ENCODE measurements at regions of chr19 and their contacts with region 1.

Region 1: GRCh38 chr19:13574933-13575332 is 68.7 kb upstream of the CACNA1A start:
- DNase-seq: no peak
- H3K4me3 ChIP-seq: no peak overlapping the region
- H3K27ac ChIP-seq: peak overlapping the region; percentile 21
- H3K27me3 ChIP-seq: no peaks in the 10 kb centered on the region
- CTCF ChIP-seq: peak; percentile 59

Region 2: DNA sequence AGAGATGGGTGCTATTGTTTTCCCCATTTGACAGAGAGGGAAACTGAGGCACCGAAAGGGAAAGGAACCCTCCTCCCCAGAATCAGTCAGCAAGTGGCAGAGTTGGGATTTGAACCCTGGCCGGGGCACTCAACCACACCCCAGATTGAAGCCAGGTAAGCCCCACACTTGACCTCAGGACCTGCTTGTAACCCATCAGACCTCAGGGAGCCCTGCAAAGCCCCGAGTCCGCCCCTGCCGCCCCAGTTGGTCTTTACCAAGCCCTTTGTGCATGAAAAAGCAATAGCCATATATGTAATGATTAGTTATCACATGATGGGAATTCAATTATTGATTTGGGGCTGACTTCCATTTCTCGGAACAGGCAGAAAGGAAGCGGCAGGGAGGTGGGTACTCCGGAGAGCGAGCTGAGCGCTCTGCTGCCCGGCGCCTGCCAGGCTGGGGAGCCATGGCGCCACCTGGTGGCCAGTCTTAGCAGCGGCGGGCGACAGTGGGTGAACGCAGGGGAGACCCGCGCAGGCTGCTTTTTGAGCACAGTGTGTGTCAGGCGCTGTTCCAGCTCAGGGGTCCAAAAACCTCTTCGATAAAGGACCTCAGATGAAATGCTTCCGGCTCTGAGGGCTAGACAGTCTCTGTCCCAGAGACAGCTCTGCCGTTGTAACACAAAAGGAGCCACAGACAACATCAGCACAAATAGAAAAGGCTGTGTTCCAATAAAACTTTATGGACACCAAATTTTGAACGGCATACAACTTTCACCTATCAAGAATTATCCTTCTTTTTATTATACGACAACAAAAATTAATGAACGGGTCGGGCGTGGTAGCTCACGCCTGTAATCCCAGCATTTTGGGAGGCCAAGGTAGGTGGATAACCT is 14.3 kb after region 1 on chr19:
- CTCF ChIA-PET with region 1: interaction called, 36 read pairs
- POLR2A ChIA-PET with region 1: no interaction called
- DNase-seq: peak; percentile 24
- H3K4me3 ChIP-seq: no peak overlapping the region
- H3K27ac ChIP-seq: no peak overlapping the region
- H3K27me3 ChIP-seq: no peaks in the 10 kb centered on the region
- CTCF ChIP-seq: peak; percentile 96

Region 3: GRCh38 chr19:14661372-14661924 is 1086.5 kb after region 1 on chr19:
- CTCF ChIA-PET with region 1: interaction called, 10 read pairs
- POLR2A ChIA-PET with region 1: no interaction called
- DNase-seq: no peak
- H3K4me3 ChIP-seq: no peak overlapping the region
- H3K27ac ChIP-seq: no peak overlapping the region
- H3K27me3 ChIP-seq: no peaks in the 10 kb centered on the region
- CTCF ChIP-seq: no peak